Left lung (tissue), 14 donors: ENCODE measurements at regions of chr3 and their contacts with region 1.

Region 1: DNA sequence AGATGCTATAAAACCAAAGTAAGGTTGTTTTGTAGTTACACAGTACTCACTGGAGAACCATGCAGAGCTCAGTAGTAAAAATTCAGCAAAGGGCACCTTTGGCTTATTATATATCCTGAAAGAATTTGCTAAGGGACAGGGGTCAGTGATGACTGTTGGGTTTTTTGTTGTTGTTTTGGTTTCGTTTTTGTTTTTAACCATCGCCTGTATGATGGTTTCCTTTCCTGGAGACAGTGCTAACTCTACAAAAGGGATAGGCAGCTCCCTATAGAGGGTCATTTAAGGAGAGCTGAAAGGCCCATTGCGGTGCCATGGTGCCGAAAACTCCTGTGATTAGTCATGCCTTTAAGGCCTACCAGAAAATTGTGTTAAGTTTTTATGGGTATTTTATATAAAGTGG is 118.2 kb upstream of the GOLIM4 start:
- DNase-seq: no peak
- ATAC-seq: no peak
- H3K4me3 ChIP-seq: no peak overlapping the region
- H3K27ac ChIP-seq: no peak overlapping the region
- H3K4me1 ChIP-seq: peaks cover 0 to 4% of the 10 kb centered on the region in 2 donors
- H3K27me3 ChIP-seq: no peaks in the 10 kb centered on the region
- CTCF ChIP-seq: no peak

Region 2: DNA sequence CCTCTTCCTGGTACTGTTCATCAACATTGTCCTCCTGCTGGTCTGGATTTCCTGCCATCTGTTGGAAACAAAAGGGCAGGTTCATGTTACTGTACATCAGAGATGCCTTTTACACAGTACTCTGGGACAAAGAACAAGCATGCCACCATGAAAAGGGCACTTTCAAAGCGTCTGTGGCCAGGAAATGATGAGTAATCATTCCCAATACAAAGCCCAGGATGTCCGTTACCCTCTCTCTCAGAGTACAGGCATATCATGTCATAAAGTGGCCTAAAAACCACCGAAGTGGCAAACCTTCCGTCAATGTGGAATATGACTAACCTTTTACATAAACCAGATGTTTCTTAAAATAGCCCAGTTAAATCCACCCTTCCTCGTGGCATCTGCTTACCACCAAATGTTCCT is 189.4 kb before region 1 on chr3:
- intact Hi-C with region 1: no loop called
- DNase-seq: no peak
- ATAC-seq: peak; percentile 49
- H3K4me3 ChIP-seq: no peak overlapping the region
- H3K27ac ChIP-seq: peak overlapping the region in 1 of 2 donors; percentile 9
- H3K4me1 ChIP-seq: peaks cover 0 to 9% of the 10 kb centered on the region in 2 donors
- H3K27me3 ChIP-seq: no peaks in the 10 kb centered on the region
- CTCF ChIP-seq: no peak

Region 3: GRCh38 chr3:168272343-168272996 is 58.5 kb after region 1 on chr3:
- intact Hi-C with region 1: no loop called
- DNase-seq: no peak
- ATAC-seq: no peak
- H3K4me3 ChIP-seq: no peak overlapping the region
- H3K27ac ChIP-seq: no peak overlapping the region
- H3K4me1 ChIP-seq: no peaks in the 10 kb centered on the region
- H3K27me3 ChIP-seq: no peaks in the 10 kb centered on the region
- CTCF ChIP-seq: no peak

Region 4: GRCh38 chr3:168312984-168313383 is 99.1 kb after region 1 on chr3:
- intact Hi-C with region 1: no loop called
- DNase-seq: no peak
- ATAC-seq: no peak
- H3K4me3 ChIP-seq: no peak overlapping the region
- H3K27ac ChIP-seq: no peak overlapping the region
- H3K4me1 ChIP-seq: no peaks in the 10 kb centered on the region
- H3K27me3 ChIP-seq: no peaks in the 10 kb centered on the region
- CTCF ChIP-seq: no peak

Region 5: GRCh38 chr3:168341956-168342936 is 128.3 kb after region 1 on chr3:
- intact Hi-C with region 1: no loop called
- DNase-seq: no peak
- ATAC-seq: peak; percentile 59
- H3K4me3 ChIP-seq: no peak overlapping the region
- H3K27ac ChIP-seq: no peak overlapping the region
- H3K4me1 ChIP-seq: peaks cover 0 to 12% of the 10 kb centered on the region in 2 donors
- H3K27me3 ChIP-seq: no peaks in the 10 kb centered on the region
- CTCF ChIP-seq: no peak

Region 6: DNA sequence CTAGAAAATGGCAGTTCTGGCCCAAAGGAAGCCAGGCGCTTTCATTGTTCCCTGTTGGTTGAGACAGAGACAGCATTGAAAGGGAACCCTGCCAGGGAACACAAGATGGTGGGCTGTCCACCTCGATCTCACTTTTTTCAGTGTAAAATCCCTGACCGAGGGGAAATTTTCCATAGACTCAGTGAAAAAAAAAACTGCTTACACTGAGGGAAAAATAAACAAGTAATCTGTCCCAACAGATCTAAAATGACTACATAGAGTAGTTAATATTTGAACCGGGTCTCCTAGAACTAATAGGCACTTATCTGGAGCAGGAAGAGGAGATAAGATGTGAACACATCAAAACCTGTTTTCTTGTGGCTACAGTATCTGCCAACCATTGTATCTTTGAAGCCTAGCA is 645.2 kb after region 1 on chr3:
- intact Hi-C with region 1: loop called in 1 of 2 experiments (anchors 10 kb)
- DNase-seq: no peak
- ATAC-seq: no peak
- H3K4me3 ChIP-seq: no peak overlapping the region
- H3K27ac ChIP-seq: no peak overlapping the region
- H3K4me1 ChIP-seq: no peaks in the 10 kb centered on the region
- H3K27me3 ChIP-seq: no peaks in the 10 kb centered on the region
- CTCF ChIP-seq: no peak